GM12878 (cell line): ENCODE measurements at regions of chr7 and their contacts with region 1.

Region 1: GRCh38 chr7:106273009-106273668 is 11.6 kb downstream of the NAMPT start:
- DNase-seq: peak; percentile 50
- ATAC-seq: peak; percentile 74
- H3K4me3 ChIP-seq: peak overlapping the region; percentile 28; the same call in 1 of the 2 replicates
- H3K27ac ChIP-seq: no peak overlapping the region
- H3K4me1 ChIP-seq: peaks cover 13% of the 10 kb centered on the region; the same call in 1 of the 2 replicates
- H3K27me3 ChIP-seq: no peaks in the 10 kb centered on the region
- CTCF ChIP-seq: no peak
- EP300 ChIP-seq: peak; percentile 38 to 45; a peak in 2 of 4 replicates
- POLR2A ChIP-seq: no peak
- RAD21 ChIP-seq: no peak

Region 2: GRCh38 chr7:106100863-106101629 is 172.1 kb before region 1 on chr7:
- CTCF ChIA-PET with region 1: no interaction called
- POLR2A ChIA-PET with region 1: no interaction called
- RAD21 ChIA-PET with region 1: no interaction called
- SMC1A ChIA-PET with region 1: no interaction called
- in situ Hi-C with region 1: no loop called
- intact Hi-C with region 1: no loop called
- DNase-seq: no peak
- ATAC-seq: peak; percentile 8; the same call in 1 of the 3 replicates
- H3K4me3 ChIP-seq: 0 out of 2 replicates have a peak overlapping the region, but pooled peaks have one; percentile 9
- H3K27ac ChIP-seq: no peak overlapping the region
- H3K4me1 ChIP-seq: peaks cover 16% of the 10 kb centered on the region
- H3K27me3 ChIP-seq: no peaks in the 10 kb centered on the region
- CTCF ChIP-seq: no peak
- EP300 ChIP-seq: no peak
- POLR2A ChIP-seq: no peak
- RAD21 ChIP-seq: no peak

Region 3: GRCh38 chr7:106260136-106260561 is 13.0 kb before region 1 on chr7:
- CTCF ChIA-PET with region 1: interaction called, 11 read pairs
- POLR2A ChIA-PET with region 1: interaction called, 5 read pairs
- RAD21 ChIA-PET with region 1: interaction called, 6 read pairs
- SMC1A ChIA-PET with region 1: interaction called, 71 read pairs
- in situ Hi-C with region 1: no loop called
- intact Hi-C with region 1: no loop called
- DNase-seq: no peak
- ATAC-seq: peak; percentile 28
- H3K4me3 ChIP-seq: no peak overlapping the region
- H3K27ac ChIP-seq: no peak overlapping the region
- H3K4me1 ChIP-seq: peaks cover 18% of the 10 kb centered on the region
- H3K27me3 ChIP-seq: no peaks in the 10 kb centered on the region
- CTCF ChIP-seq: no peak
- EP300 ChIP-seq: no peak
- POLR2A ChIP-seq: no peak
- RAD21 ChIP-seq: no peak

Region 4: DNA sequence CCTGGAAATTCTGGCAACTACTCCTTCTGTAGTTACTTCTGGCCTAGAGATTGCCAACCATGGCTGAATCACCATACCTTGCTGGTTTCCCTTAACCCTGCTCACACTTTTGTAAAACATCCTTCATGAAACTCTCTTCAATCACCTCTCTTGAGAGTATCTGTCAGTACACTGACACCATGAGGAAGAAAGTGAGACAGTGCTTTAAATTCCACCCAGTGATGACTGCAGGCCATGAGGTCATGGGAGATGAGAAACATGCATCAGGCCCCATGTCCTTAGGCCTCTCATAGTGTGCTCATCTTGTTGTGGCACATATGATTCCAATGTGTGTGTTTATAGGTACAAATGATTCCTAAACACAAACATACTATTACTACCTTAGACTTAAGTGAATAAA is 36.2 kb after region 1 on chr7:
- CTCF ChIA-PET with region 1: no interaction called
- POLR2A ChIA-PET with region 1: no interaction called
- RAD21 ChIA-PET with region 1: no interaction called
- SMC1A ChIA-PET with region 1: no interaction called
- in situ Hi-C with region 1: no loop called
- intact Hi-C with region 1: no loop called
- DNase-seq: no peak
- ATAC-seq: no peak
- H3K4me3 ChIP-seq: no peak overlapping the region
- H3K27ac ChIP-seq: no peak overlapping the region
- H3K4me1 ChIP-seq: peaks cover 5% of the 10 kb centered on the region; the same call in 1 of the 2 replicates
- H3K27me3 ChIP-seq: no peaks in the 10 kb centered on the region
- CTCF ChIP-seq: no peak; a peak in 1 of 6 replicates
- EP300 ChIP-seq: no peak
- POLR2A ChIP-seq: no peak
- RAD21 ChIP-seq: 0 out of 2 replicates have a peak, but pooled peaks have one; percentile 25